Head of caudate nucleus (tissue), 42 donors: ENCODE measurements at regions of chr2 and their contacts with region 1.

Region 1: DNA sequence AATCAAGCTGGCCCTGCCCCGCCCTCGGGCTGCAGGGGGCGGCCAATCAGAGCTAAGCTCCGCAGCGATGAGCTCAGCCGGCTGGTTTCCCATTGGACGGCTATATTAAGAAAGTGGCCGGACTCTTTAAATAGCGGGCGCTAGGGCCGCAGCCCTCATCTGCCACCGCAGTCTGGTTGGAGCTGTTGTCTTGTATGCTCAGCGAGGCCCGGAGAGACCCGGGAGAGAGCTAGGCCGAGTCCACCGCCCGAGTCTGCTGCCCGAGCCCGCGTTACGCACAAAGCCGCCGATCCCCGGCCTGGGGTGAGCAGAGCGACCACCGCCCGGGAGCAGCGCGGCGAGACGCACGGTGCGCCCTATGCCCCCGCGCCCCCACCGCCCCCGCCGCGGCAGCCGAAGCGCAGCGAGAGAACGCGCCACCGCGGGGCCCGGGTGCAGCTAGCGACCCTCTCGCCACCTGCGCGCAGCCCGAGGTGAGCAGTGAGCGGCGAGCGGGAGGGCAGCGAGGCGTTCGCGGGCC is at the start of gene RHOB:
- DNase-seq: peak; percentile 91 to 99 (median 99)

Region 2: DNA sequence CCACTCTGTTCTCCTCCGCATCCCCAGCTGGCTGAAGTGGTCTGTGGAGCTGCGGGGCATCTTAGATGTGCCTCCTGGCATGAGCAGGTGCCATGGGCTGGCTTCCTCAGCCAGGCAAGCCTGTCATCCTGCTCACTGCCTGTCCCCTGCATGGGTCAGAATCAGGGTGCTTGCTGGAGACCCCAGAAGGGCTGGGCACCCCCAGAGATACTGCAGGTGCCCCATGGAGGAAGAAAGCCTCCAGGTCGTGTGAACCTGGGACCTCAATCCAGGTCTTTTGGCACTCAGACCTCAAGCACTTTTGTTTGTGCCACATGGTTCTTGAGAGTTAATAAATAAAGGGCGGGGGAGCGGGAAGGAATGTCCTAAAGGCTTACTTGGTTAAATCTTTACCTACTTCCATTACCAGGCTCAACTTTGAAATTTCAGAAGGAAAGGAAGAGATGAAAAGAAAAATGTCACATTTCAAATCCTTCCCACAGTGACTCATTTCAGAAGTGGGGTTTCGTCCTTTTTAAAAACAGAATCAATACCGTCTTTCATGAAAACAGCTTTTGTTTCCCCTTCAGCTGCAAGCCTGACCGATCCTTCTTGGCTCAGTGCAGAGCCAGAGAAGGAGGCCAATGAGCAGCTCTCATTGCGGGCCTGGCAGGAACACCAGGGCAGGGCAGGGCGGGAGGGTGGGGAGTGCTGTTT is 69.8 kb after region 1 on chr2:
- intact Hi-C with region 1: loop called (anchors 2 kb)
- DNase-seq: peak; percentile 46 to 92 (median 78)

Region 3: DNA sequence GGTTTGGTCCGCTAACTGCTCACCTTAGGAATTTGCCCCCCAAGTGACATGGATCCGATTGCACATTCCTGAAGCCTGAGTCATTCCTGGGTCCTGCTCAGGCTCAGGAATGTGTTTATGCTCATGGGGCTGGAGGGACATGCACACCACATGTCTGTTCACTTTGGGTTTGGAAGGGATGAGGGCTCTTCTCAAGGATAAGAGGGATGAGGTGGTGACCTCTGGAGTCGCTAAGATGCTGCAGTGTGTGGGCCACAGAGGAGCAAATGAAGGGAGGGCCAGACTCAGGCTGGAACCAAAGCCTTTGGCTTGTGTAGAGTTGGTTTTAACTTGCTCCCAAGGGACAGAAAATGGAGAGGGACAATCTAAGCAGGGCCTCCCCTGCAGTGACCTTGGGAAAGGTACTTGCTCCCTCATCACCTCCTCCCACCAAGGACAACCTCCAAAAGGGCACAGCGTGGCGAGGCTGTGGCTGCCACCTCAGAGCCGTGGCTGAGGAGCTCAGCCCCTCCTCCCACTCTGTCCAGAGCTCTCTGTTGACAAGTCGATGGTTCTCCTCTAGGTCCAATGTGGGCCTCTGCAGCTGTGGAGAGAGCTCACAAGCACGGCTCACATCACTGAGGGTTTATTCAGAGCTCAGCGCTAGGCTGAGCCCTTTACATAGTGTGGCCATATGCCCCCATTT is 137.8 kb after region 1 on chr2:
- intact Hi-C with region 1: loop called (anchors 5 kb)
- DNase-seq: peak; percentile 31 to 89 (median 74)

Region 4: GRCh38 chr2:20635675-20636584 is 189.0 kb after region 1 on chr2:
- intact Hi-C with region 1: loop called (anchors 2 kb)
- DNase-seq: peak; percentile 79 to 96 (median 91)

Region 5: GRCh38 chr2:20642055-20642971 is 195.3 kb after region 1 on chr2:
- intact Hi-C with region 1: loop called (anchors 2 kb)
- DNase-seq: peak; percentile 66 to 93 (median 85)